ENCODE measurements at regions of chr20 and their contacts with region 1.

Region 1: DNA sequence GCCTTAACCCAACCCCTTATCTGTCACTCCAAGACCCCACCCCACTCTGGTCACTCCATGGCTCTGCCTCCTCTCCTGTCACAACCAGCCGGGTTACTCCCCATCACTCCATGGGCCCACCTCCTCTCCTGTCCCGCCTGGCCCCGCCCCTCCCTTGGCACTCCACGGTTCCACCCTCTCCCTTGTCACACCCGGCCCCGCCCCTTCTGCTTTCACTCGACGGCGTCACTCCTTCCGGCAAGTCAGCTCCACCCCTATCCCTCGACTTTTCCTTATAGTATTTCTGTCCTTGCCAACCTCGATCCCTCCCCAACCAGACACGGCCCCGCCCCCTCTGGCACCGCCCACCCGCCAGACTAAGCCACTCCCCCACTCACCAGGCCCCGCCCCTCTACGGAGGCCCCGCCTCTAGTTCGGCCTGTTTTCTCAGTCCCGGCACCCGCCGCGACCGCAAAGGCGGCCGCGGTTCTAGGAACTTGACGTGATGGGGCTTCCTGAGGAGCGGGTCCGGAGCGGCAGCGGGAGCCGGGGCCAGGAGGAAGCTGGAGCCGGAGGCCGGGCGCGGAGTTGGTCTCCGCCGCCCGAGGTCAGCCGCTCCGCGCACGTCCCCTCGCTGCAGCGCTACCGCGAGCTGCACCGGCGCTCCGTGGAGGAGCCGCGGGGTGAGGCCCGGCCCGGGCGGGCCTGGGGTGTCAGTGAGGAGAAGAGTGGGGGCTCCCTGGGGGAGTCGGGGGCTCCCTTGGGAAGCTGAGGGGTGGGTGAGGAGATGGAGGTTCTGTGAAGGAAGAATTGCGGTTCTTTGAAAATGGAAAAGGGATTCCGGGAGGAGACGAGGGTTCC is at the start of gene ACSS2:
- DNase-seq: peak; percentile 99
- H3K4me3 ChIP-seq: peak within 1 kb of the TSS; percentile 72 to 89
- H3K27ac ChIP-seq: peak within 1 kb of the TSS; percentile 83 to 87
- H3K4me1 ChIP-seq: no peaks in the 10 kb centered on the region
- H3K27me3 ChIP-seq: no peaks in the 10 kb centered on the region
- CTCF ChIP-seq: peak in 2 of 4 experiments; percentile 17 to 22
- POLR2A ChIP-seq: peak; percentile 93
- total RNA-seq, gene ACSS2: 37.4 to 44.2 TPM

Region 2: GRCh38 chr20:34834459-34834893 is 41.9 kb before region 1 on chr20:
- intact Hi-C with region 1: no loop called
- DNase-seq: no peak
- H3K4me3 ChIP-seq: no peak overlapping the region
- H3K27ac ChIP-seq: no peak overlapping the region
- H3K4me1 ChIP-seq: no peaks in the 10 kb centered on the region
- H3K27me3 ChIP-seq: no peaks in the 10 kb centered on the region
- CTCF ChIP-seq: peak in 3 of 4 experiments; percentile 40 to 53 (median 44)
- POLR2A ChIP-seq: no peak

Region 3: GRCh38 chr20:34955232-34956040 is 79.1 kb after region 1 on chr20 and contains the starts of genes GSS and MYH7B:
- intact Hi-C with region 1: loop called (anchors 1 kb)
- DNase-seq: peak; percentile 96
- H3K4me3 ChIP-seq: peak within 1 kb of the TSS; percentile 67 to 68
- H3K27ac ChIP-seq: peak within 1 kb of the TSS; percentile 90 to 93
- H3K4me1 ChIP-seq: no peaks in the 10 kb centered on the region
- H3K27me3 ChIP-seq: no peaks in the 10 kb centered on the region
- CTCF ChIP-seq: peak in 3 of 4 experiments; percentile 54 to 79 (median 72)
- POLR2A ChIP-seq: peak; percentile 79
- total RNA-seq, gene GSS: 84.4 to 101 TPM
- total RNA-seq, gene MYH7B: 0.27 to 11.5 TPM

Region 4: DNA sequence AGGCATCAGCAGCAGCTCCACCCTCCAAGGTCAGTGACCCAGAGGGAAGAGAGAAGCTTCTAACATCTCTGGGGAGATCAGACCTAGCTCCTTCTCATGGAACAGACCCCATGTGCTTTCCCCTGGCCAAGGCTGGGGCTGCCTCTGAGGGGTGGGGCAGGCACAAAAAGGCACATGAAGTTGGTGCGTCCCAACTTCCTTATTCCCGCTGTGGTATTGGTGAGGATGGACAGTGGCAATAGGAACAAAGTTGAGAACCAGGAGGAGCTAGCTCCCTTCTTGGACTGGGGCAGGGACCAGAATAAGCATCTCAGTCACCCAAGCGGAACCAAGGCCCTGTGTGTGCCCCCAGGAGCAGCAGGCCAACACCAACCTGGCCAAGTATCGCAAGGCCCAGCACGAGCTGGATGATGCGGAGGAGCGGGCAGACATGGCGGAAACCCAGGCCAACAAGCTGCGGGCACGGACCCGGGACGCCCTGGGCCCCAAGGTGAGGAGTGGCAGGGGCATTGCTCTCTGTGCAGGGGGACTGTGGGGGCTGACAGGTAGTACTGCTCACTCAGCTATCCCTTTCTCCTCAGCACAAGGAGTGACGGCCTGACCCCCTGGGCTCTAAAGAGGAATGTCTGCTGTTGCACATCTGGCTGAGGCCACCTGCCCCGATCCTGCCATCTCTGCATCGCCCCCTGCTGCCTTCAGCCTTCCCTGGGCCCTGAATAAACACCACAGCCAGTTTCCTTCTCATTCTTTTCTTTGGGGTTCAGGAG is 125.4 kb after region 1 on chr20:
- intact Hi-C with region 1: no loop called
- DNase-seq: no peak
- H3K4me3 ChIP-seq: no peak overlapping the region
- H3K27ac ChIP-seq: no peak overlapping the region
- H3K4me1 ChIP-seq: peaks cover 7% of the 10 kb centered on the region
- H3K27me3 ChIP-seq: no peaks in the 10 kb centered on the region
- CTCF ChIP-seq: no peak
- POLR2A ChIP-seq: no peak

Region 5: DNA sequence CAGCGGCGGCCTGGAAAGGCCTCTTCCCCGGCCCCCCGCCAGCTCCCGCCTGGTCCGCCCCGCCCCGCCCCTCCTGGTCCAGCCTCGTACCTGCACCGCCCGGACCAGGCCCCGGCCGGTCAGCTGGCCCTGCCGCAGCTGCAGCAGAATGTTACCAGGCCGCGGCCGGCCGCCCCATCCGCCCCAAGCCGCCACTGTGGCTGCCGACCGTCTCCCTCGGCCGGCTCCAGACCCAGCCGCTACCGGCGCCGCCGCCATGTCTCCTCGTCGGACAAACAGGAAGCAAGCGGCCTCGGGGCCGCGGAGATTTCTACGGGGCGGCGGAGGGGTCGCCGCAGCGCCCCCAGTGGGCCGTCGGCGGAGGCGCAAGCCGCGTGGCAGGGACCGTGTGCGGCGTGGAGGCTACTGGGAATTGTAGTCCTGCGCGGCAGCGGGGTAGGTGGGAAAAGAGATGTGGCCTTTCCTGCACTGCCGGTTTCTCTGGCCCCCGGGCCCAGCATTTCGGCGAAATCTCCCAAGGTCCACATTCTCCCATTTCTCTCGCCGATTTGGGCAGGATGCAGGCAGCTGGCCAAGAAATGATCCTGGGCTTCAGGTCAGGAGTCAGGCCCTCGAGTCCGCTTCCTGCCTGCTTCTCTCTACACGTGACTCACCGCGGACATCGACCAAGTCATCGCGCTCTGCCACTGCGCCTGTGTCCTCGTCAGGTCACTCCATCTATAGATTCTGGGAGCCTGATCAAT is 216.3 kb after region 1 on chr20 and contains the start of gene TRPC4AP:
- intact Hi-C with region 1: loop called (anchors 1 kb)
- DNase-seq: peak; percentile 81
- H3K4me3 ChIP-seq: peak within 1 kb of the TSS; percentile 71 to 96
- H3K27ac ChIP-seq: peak within 1 kb of the TSS; percentile 94
- H3K4me1 ChIP-seq: peaks cover 3% of the 10 kb centered on the region
- H3K27me3 ChIP-seq: no peaks in the 10 kb centered on the region
- CTCF ChIP-seq: peak; percentile 97 to 99 (median 98)
- POLR2A ChIP-seq: peak; percentile 83
- total RNA-seq, gene TRPC4AP: 65.4 to 76.6 TPM

Region 6: GRCh38 chr20:35207950-35208611 is 331.7 kb after region 1 on chr20:
- intact Hi-C with region 1: loop called (anchors 10 kb)
- DNase-seq: peak; percentile 82
- H3K4me3 ChIP-seq: no peak overlapping the region
- H3K27ac ChIP-seq: peak overlapping the region; percentile 78
- H3K4me1 ChIP-seq: no peaks in the 10 kb centered on the region
- H3K27me3 ChIP-seq: no peaks in the 10 kb centered on the region
- CTCF ChIP-seq: peak; percentile 54 to 90 (median 85)
- POLR2A ChIP-seq: no peak

Region 7: GRCh38 chr20:35269055-35269781 is 392.8 kb after region 1 on chr20:
- intact Hi-C with region 1: loop called (anchors 5 kb)
- DNase-seq: peak; percentile 61
- H3K4me3 ChIP-seq: no peak overlapping the region
- H3K27ac ChIP-seq: peak overlapping the region; percentile 37 to 48
- H3K4me1 ChIP-seq: no peaks in the 10 kb centered on the region
- H3K27me3 ChIP-seq: no peaks in the 10 kb centered on the region
- CTCF ChIP-seq: peak; percentile 72 to 77 (median 74)
- POLR2A ChIP-seq: no peak

Region 8: GRCh38 chr20:35277531-35278395 is 401.4 kb after region 1 on chr20 and contains the start of gene MMP24OS:
- intact Hi-C with region 1: loop called (anchors 5 kb)
- DNase-seq: peak; percentile 87
- H3K4me3 ChIP-seq: peak within 1 kb of the TSS; percentile 72 to 91
- H3K27ac ChIP-seq: peak within 1 kb of the TSS; percentile 92 to 95
- H3K4me1 ChIP-seq: peaks cover 17% of the 10 kb centered on the region
- H3K27me3 ChIP-seq: no peaks in the 10 kb centered on the region
- CTCF ChIP-seq: peak in 3 of 4 experiments; percentile 8 to 35 (median 14)
- POLR2A ChIP-seq: peak; percentile 92
- total RNA-seq, gene MMP24OS: 35.4 to 65.8 TPM

Measured in prostate gland (tissue), 2 donors.